SK-N-SH (cell line): ENCODE measurements at regions of chr10 and their contacts with region 1.

Region 1: GRCh38 chr10:69506834-69507721 is 55.8 kb downstream of the TSPAN15 start:
- DNase-seq: peak; percentile 21
- H3K4me3 ChIP-seq: no peak overlapping the region
- H3K27ac ChIP-seq: no peak overlapping the region
- H3K4me1 ChIP-seq: peaks cover 0 to 4% of the 10 kb centered on the region in 2 experiments; a peak in 1 of 4 replicates
- H3K27me3 ChIP-seq: no peaks in the 10 kb centered on the region
- CTCF ChIP-seq: no peak
- EP300 ChIP-seq: no peak
- RAD21 ChIP-seq: no peak

Region 2: GRCh38 chr10:69425511-69426298 is 81.4 kb before region 1 on chr10:
- CTCF ChIA-PET with region 1: interaction called, 28 read pairs
- POLR2A ChIA-PET with region 1: no interaction called
- DNase-seq: no peak
- H3K4me3 ChIP-seq: no peak overlapping the region
- H3K27ac ChIP-seq: no peak overlapping the region
- H3K4me1 ChIP-seq: no peaks in the 10 kb centered on the region
- H3K27me3 ChIP-seq: no peaks in the 10 kb centered on the region; the same call in 1 of the 2 replicates
- CTCF ChIP-seq: no peak
- EP300 ChIP-seq: no peak
- RAD21 ChIP-seq: no peak

Region 3: DNA sequence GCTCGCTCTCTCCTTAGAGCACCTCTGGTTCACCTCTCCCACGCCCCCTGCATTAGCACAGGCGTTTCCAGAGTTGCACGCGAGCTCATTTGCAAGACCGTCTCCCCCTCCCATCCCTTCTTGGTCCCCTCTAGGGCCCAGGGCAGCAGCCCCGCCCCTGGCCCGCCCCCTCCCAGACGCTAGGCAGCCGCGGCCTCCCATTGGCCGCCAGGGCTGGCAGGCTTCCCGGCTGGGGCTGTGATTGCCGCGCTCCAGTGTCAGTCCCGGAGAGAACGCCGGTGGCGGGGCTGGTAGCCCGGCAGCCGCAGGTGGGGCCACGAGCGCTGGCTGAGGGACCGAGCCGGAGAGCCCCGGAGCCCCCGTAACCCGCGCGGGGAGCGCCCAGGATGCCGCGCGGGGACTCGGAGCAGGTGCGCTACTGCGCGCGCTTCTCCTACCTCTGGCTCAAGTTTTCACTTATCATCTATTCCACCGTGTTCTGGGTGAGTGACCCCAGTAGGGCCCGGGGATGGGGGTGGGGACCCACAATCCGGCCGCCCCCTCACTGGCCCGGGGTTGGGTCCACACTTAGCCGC is 55.8 kb before region 1 on chr10 and contains the start of gene TSPAN15:
- CTCF ChIA-PET with region 1: interaction called, 28 read pairs
- POLR2A ChIA-PET with region 1: no interaction called
- DNase-seq: peak; percentile 96
- H3K4me3 ChIP-seq: peak within 1 kb of the TSS; percentile 67 to 74
- H3K27ac ChIP-seq: no peak within 1 kb of the TSS; a peak in 1 of 4 replicates
- H3K4me1 ChIP-seq: peaks cover 13 to 20% of the 10 kb centered on the region in 2 experiments; a peak in 2 of 4 replicates
- H3K27me3 ChIP-seq: no peaks in the 10 kb centered on the region
- CTCF ChIP-seq: no peak
- EP300 ChIP-seq: no peak
- RAD21 ChIP-seq: no peak
- polyA plus RNA-seq, gene TSPAN15: 8.5 and 13.8 TPM in 2 replicates

Region 4: DNA sequence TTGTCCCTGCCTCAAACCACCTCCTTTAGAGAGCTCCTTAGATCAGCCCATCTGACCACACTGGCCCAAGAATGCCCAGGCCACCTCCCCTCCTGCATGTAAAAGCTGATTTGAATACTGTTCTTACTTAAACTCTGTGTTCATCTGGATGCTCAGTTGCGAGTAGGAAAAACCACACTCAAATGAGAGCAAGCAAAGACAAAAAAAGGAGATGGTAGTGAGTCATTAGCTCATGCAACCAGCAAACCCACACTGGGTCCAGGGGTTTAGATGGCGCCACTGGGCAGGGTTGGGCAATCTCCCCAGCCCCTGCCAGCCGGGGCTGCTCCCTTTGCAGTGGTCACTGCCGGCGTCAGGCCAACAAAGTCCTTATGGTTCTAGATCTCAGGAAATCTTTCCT is 23.1 kb before region 1 on chr10:
- CTCF ChIA-PET with region 1: interaction called, 15 read pairs
- POLR2A ChIA-PET with region 1: no interaction called
- DNase-seq: no peak
- H3K4me3 ChIP-seq: no peak overlapping the region
- H3K27ac ChIP-seq: no peak overlapping the region
- H3K4me1 ChIP-seq: peaks cover 0 to 34% of the 10 kb centered on the region in 2 experiments; a peak in 1 of 4 replicates
- H3K27me3 ChIP-seq: no peaks in the 10 kb centered on the region
- CTCF ChIP-seq: no peak
- EP300 ChIP-seq: no peak
- RAD21 ChIP-seq: no peak

Region 5: DNA sequence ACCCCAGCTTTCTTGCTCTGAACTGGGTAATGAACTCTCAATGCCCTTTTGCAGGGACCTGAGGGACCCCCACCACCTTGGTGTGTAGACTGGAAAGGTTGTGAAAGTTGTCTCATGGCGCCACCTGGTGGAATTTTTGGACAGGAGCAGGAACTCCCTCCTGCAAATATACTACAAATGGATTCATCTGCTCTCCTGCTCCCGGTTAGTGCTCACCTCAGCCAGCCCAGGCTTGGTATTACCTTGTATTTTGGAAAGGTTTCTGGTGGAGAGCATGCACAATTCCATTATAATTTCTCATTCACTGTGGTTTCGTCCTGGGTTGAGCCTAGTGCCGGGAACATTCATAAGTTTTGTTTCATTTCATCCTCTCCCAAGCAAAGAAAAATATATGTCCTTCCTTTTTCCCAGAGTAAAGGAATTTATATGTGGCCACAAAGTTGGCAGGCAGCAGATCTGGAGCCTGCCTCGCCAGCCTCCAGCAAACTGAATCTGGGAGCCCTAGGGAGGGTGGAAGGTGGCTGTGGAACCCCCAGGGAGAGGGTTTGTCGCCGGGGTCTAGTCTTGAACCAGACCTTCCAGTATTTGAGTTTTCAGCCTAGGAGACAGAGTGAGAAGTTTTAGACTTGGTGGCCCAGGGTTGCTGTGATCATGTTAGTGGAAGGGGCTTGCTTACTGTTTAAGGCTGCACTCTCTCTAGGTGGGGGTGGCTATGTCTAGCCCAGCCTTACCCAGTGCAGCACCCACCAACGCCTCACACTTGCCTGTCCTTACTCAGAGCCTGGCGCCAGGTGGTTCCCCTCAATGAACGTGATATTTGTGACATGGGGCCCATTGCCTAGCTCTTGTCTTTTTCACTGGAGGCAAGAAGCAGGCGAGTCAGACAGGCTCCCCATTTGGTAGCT is 132.5 kb after region 1 on chr10:
- CTCF ChIA-PET with region 1: interaction called, 364 read pairs
- POLR2A ChIA-PET with region 1: no interaction called
- DNase-seq: peak; percentile 81
- H3K4me3 ChIP-seq: peak overlapping the region in 1 of 2 experiments; percentile 48; a peak in 1 of 4 replicates
- H3K27ac ChIP-seq: no peak overlapping the region
- H3K4me1 ChIP-seq: no peaks in the 10 kb centered on the region; a peak in 1 of 4 replicates
- H3K27me3 ChIP-seq: no peaks in the 10 kb centered on the region
- CTCF ChIP-seq: peak; percentile 93
- EP300 ChIP-seq: no peak
- RAD21 ChIP-seq: peak; percentile 90